Heart right ventricle (tissue), 16 donors: ENCODE measurements at regions of chr5 and their contacts with region 1.

Region 1: GRCh38 chr5:83230511-83230910 is 153.2 kb downstream of the XRCC4 start:
- DNase-seq: no peak
- ATAC-seq: no peak
- H3K4me3 ChIP-seq: no peak overlapping the region
- H3K27ac ChIP-seq: no peak overlapping the region
- H3K4me1 ChIP-seq: no peaks in the 10 kb centered on the region
- H3K27me3 ChIP-seq: no peaks in the 10 kb centered on the region
- CTCF ChIP-seq: no peak

Region 2: DNA sequence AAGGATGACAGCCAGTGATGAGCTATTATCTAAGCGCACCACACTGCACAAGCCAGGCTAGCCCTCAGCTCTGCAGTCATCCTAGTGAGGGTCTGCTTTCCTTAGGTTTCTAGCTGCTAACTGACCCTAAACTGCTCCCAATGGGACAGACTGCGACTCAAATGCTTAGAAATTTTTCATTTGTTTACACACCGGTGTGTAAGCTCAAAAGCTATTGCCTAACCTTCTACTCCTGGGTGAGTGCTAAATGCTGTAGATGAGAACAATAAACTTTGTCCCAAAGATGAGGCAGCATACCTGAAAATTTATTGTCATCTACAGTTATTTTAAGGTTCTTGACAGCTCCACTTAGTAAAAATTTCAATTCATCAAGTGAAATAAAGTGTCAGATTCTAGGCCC is 464.7 kb before region 1 on chr5:
- intact Hi-C with region 1: no loop called
- DNase-seq: no peak
- ATAC-seq: no peak
- H3K4me3 ChIP-seq: no peak overlapping the region
- H3K27ac ChIP-seq: no peak overlapping the region
- H3K4me1 ChIP-seq: no peaks in the 10 kb centered on the region
- H3K27me3 ChIP-seq: no peaks in the 10 kb centered on the region
- CTCF ChIP-seq: no peak

Region 3: DNA sequence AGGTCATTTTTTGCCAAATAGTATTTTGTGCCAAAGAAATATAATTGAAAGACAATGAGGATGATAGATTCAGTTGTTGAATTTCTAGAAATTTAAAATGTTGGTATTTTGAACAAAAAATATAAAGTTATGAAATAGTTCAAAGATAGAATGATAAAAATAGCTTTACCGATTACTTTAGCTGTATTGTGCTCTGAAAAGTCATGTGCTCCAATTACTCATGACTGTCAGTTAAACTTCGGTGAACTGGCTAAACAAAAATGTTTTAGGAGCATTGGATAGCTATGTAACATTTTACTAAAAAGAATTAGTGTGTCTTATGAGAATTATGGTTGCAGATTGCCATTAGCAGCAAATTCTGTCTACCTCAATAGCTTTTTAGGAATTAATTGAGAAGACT is 63.7 kb after region 1 on chr5:
- intact Hi-C with region 1: loop called in 1 of 10 experiments (anchors 10 kb)
- DNase-seq: no peak
- ATAC-seq: no peak
- H3K4me3 ChIP-seq: no peak overlapping the region
- H3K27ac ChIP-seq: no peak overlapping the region
- H3K4me1 ChIP-seq: peaks cover 0 to 8% (median 0%) of the 10 kb centered on the region in 9 donors
- H3K27me3 ChIP-seq: no peaks in the 10 kb centered on the region
- CTCF ChIP-seq: no peak